Activated naive CD8-positive, alpha-beta T cell treated with anti-CD3 and anti-CD28 coated beads, Interleukin-2, amount 10 ng/mL, durations not matched to agents 7 days and 5 days (primary cell): ENCODE measurements at regions of chr1 and their contacts with region 1.

Region 1: GRCh38 chr1:226731257-226731893 is 7.7 kb downstream of the ITPKB start:
- DNase-seq: no peak
- ATAC-seq: no peak
- H3K4me3 Mint-ChIP-seq: peak overlapping the region; percentile 90
- H3K27ac Mint-ChIP-seq: peak overlapping the region; percentile 88
- H3K4me1 Mint-ChIP-seq: peaks cover 77% of the 10 kb centered on the region
- H3K27me3 Mint-ChIP-seq: no peaks in the 10 kb centered on the region

Region 2: DNA sequence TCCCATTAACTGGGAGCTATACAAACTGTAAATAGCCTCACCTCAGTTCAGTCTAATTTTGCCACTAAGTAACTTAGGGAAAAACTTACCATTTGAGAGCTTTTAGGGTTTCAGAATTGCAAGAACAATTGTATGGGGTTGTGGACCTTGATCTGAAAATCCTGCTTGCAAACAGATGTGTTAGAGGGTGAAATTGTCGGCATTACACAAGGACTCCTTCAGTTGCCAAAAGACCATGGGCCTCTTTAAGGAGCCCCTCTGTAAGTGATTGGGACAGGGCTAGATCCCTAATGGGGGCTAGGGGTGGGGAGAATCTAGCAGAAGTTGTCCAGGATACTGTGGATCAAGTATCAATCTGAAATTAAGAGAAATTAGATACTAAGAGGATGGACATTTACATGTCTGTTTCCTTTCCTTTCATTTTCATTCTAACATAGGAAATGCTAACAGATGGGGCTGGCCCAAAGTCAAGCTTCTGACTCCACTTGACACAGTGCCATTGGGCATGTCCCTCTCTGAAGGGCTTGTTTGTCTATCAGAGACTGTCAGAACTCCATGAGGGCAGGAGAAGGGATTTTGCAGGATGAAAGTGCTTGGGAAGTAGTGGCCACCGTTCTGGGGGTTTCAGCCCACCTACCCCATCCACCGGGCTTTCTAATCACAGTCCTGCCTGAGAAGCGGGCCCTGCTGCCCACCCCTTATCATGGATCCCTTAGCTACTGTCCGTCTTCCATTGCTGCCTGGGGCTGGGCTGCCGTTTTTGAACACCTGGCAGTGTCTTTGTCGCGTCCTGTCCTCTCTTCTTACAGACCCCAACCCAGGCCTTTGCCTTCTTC is 128.1 kb before region 1 on chr1:
- POLR2A ChIA-PET with region 1: no interaction called
- DNase-seq: no peak
- ATAC-seq: no peak
- H3K4me3 Mint-ChIP-seq: no peak overlapping the region
- H3K27ac Mint-ChIP-seq: no peak overlapping the region
- H3K4me1 Mint-ChIP-seq: peaks cover 3% of the 10 kb centered on the region
- H3K27me3 Mint-ChIP-seq: peaks cover 5% of the 10 kb centered on the region

Region 3: DNA sequence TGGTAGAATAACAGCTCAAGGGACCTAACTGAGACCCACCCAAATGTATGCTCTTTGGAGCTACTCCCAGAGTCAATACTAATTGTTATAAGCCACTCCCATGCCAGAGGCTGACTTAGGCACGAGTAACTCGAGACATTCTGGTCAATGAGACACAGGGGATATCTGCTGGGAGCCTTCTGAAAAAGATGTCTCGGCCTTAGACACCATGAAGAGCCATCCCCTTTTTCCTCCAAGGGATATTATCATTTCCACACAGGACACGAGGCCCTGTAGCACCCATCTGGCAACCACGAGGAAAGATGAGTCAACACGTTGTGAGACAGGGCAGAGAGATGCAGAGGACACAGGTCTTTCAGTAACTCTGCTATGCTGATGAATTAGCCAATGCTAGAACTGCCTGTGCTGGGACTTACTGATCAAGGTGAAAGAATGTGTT is 23.0 kb before region 1 on chr1:
- POLR2A ChIA-PET with region 1: interaction called, 43 read pairs
- DNase-seq: no peak
- ATAC-seq: no peak
- H3K4me3 Mint-ChIP-seq: peak overlapping the region; percentile 49
- H3K27ac Mint-ChIP-seq: peak overlapping the region; percentile 85
- H3K4me1 Mint-ChIP-seq: peaks cover 65% of the 10 kb centered on the region
- H3K27me3 Mint-ChIP-seq: no peaks in the 10 kb centered on the region

Region 4: DNA sequence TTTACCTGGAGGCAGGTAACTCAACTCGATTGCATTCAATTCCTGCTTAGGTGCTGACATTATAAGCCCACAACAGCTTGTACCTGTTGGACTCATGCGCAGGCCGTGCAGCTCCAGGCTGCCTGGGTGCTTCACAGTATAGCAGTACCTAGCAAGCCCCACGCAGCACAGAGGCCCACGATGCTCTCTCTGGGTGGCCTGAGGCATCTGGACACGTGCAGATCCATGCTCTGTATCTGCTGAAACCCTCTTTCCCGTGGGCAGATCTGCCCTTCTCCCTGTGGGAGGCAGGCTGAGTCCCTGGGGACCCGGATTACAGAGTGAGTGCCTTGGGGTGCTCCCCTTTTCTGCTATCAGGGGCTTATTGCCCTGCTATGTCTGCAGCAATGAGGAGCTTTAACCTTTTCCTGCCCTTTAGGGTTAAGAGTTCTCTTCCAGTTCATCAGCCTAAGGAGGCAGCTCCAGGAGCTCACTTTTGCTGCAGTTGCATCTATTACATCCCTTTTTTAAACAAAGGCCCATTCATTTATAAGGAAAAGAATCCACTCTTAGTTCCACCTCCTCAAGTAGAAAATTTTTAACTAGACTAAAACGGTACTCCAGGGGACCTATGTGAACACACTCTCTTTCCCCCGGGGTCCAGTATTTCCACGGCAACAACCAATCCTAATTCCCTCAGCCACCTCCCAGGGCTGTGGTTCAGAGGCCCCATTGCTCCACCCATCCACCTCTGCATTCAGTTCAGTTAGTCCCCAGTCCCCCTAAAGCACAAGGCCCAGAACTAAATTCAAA is 11.6 kb before region 1 on chr1:
- POLR2A ChIA-PET with region 1: interaction called, 15 read pairs
- DNase-seq: no peak
- ATAC-seq: no peak
- H3K4me3 Mint-ChIP-seq: peak overlapping the region; percentile 36
- H3K27ac Mint-ChIP-seq: peak overlapping the region; percentile 74
- H3K4me1 Mint-ChIP-seq: peaks cover 71% of the 10 kb centered on the region
- H3K27me3 Mint-ChIP-seq: no peaks in the 10 kb centered on the region

Region 5: GRCh38 chr1:226903819-226904716 is 172.7 kb after region 1 on chr1:
- POLR2A ChIA-PET with region 1: no interaction called
- DNase-seq: no peak
- ATAC-seq: no peak
- H3K4me3 Mint-ChIP-seq: no peak overlapping the region
- H3K27ac Mint-ChIP-seq: no peak overlapping the region
- H3K4me1 Mint-ChIP-seq: no peaks in the 10 kb centered on the region
- H3K27me3 Mint-ChIP-seq: no peaks in the 10 kb centered on the region